ENCODE measurements at regions of chr1 and their contacts with region 1.

Region 1: DNA sequence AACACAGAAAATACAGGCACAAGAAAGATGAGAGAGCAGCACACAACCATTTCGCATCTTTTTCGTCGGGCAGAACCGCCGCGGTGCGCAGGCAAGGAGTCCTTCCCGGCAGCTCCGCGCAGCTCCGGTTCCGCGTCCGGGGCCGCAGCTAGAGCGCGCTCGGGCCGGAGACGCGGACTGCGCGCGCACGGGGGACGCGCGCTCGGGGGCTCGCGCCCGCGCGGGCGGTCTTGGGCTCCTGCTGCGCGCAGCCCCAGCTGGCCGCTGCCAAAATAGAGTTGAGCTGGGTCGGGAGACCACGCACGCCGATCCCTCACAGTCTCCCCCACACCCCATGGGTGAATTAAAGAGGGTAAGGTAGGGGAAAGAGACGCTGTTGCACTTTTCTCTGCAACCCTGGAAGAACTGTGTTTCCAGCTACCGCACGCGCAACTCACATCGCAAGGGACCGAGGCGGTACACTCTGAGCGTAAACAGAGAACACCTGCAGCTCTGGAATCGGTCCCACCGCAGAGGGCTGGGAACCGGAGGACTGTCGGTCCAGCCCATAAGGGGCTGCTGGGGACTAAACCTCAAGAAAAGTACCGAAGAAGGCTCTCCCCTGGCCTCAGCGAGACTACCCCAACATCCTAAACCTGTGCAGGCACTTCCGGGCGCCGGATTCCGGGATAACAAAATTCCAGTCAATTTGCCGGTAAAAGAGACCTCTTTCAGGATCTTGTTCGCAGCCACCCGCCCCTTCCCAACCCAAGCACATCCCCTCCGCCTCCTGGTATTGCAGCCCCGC is 1.7 kb downstream of the NR5A2 start:
- DNase-seq: peak; percentile 60 to 81
- H3K4me3 ChIP-seq: peak overlapping the region; percentile 53
- H3K4me3 Mint-ChIP-seq: peak overlapping the region; percentile 74
- H3K27ac Mint-ChIP-seq: peak overlapping the region; percentile 84
- H3K4me1 ChIP-seq: peaks cover 21% of the 10 kb centered on the region
- H3K4me1 Mint-ChIP-seq: peaks cover 9% of the 10 kb centered on the region
- H3K27me3 ChIP-seq: no peaks in the 10 kb centered on the region
- H3K27me3 Mint-ChIP-seq: no peaks in the 10 kb centered on the region
- CTCF ChIP-seq: no peak

Region 2: DNA sequence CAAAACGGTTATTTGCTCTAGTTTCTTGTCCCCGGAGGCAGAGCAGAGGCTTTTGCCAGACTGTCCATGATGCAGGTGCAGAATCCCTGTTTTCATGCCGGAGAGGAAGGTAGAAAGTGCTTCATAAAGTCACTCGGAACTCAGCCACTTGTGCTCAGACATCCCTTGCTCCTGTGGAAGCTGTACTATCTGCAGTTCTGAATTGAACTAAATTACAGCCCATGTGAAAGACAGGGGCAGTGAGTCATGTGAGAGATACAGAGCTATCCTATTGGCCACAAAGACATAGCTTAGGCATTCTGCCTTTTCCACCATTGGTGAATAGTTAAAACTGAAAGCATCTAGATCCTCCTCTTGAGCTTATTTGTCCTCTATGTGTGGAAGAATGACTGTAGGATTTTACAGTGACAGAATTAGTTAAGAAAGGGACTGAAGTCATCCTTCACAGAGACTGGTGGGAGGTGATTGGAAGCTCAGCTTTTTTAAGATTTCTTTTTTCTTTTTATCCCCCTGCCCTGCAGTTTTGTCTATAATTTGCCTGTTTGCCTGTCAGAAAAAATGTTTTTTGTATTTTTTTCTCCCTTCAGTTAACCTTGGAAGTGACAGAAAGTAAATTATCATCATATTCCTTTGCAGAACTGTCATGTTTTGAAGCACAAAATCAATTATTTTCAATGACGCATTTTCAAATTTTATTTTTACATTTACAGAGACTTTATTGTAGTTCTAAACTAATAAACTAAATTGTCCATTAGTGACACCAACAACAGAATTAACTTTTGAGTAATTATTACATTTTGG is 1091.8 kb before region 1 on chr1:
- CTCF ChIA-PET with region 1: no interaction called
- POLR2A ChIA-PET with region 1: no interaction called
- intact Hi-C with region 1: loop called (anchors 10 kb)
- DNase-seq: peak; percentile 60 to 69
- H3K4me3 ChIP-seq: peak overlapping the region; percentile 52
- H3K4me3 Mint-ChIP-seq: no peak overlapping the region
- H3K27ac Mint-ChIP-seq: peak overlapping the region; percentile 11
- H3K4me1 ChIP-seq: peaks cover 29% of the 10 kb centered on the region
- H3K4me1 Mint-ChIP-seq: peaks cover 13% of the 10 kb centered on the region
- H3K27me3 ChIP-seq: no peaks in the 10 kb centered on the region
- H3K27me3 Mint-ChIP-seq: no peaks in the 10 kb centered on the region
- CTCF ChIP-seq: no peak

Region 3: DNA sequence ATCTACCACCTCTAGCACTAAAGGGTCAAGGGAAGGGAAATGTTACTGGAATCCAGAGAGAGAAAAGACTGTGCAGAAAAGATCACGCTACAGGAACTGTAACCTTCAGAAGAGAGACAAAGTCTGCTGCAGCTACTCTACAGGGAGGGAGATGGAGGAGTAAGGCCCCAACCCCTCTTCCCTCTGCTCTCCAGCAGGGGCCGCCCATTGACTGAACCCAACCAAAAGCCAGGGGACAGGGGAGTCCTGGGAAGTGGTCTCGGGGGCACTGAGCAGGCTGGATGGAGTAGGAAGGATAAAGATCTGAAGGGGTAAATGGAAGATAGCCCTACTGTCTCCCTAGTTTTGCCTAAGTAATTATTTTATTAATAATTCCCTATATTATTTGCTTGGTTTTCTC is 74.5 kb before region 1 on chr1:
- CTCF ChIA-PET with region 1: interaction called, 6 read pairs
- POLR2A ChIA-PET with region 1: no interaction called
- intact Hi-C with region 1: loop called (anchors 1 kb)
- DNase-seq: peak; percentile 53 to 58
- H3K4me3 ChIP-seq: no peak overlapping the region
- H3K4me3 Mint-ChIP-seq: no peak overlapping the region
- H3K27ac Mint-ChIP-seq: no peak overlapping the region
- H3K4me1 ChIP-seq: 0 out of 2 replicates have a peak, but pooled peaks cover 6% of the 10 kb centered on the region
- H3K4me1 Mint-ChIP-seq: peaks cover 7% of the 10 kb centered on the region
- H3K27me3 ChIP-seq: no peaks in the 10 kb centered on the region
- H3K27me3 Mint-ChIP-seq: no peaks in the 10 kb centered on the region
- CTCF ChIP-seq: peak; percentile 59 to 82

Region 4: GRCh38 chr1:199970125-199970524 is 59.1 kb before region 1 on chr1:
- CTCF ChIA-PET with region 1: no interaction called
- POLR2A ChIA-PET with region 1: no interaction called
- intact Hi-C with region 1: no loop called
- DNase-seq: no peak
- H3K4me3 ChIP-seq: no peak overlapping the region
- H3K4me3 Mint-ChIP-seq: no peak overlapping the region
- H3K27ac Mint-ChIP-seq: no peak overlapping the region
- H3K4me1 ChIP-seq: no peaks in the 10 kb centered on the region
- H3K4me1 Mint-ChIP-seq: no peaks in the 10 kb centered on the region
- H3K27me3 ChIP-seq: no peaks in the 10 kb centered on the region; the same call in 1 of the 2 replicates
- H3K27me3 Mint-ChIP-seq: no peaks in the 10 kb centered on the region
- CTCF ChIP-seq: no peak

Region 5: DNA sequence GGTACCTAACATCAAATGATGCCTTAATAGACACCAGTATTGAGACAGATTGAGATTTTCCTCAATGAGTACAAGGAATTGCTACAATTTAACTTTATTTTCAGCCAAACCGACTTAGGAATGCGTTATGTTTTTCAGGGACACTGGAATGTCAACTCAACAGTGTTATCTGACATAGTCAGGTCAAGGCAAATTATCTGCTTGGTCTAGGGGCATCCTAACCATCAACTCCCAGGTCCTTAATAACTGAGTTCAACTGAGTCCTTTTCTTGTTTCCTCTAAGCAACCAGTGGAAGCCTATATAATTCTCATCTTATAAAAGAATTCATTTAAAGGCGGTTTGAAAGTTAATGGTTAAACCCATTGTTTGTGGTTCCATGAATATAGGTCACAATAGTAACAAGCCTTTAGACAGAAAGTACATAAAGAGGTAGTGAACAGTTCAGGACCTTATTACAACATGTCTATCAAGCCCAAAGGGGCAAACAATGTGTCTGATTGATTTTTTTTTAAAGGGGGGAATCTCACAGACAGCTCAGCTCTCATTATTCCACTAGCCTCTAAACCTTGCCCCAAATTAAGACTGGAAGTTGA is 34.0 kb before region 1 on chr1:
- CTCF ChIA-PET with region 1: no interaction called
- POLR2A ChIA-PET with region 1: interaction called, 11 read pairs
- intact Hi-C with region 1: no loop called
- DNase-seq: no peak
- H3K4me3 ChIP-seq: no peak overlapping the region
- H3K4me3 Mint-ChIP-seq: no peak overlapping the region
- H3K27ac Mint-ChIP-seq: no peak overlapping the region
- H3K4me1 ChIP-seq: peaks cover 7% of the 10 kb centered on the region; the same call in 1 of the 2 replicates
- H3K4me1 Mint-ChIP-seq: no peaks in the 10 kb centered on the region
- H3K27me3 ChIP-seq: no peaks in the 10 kb centered on the region
- H3K27me3 Mint-ChIP-seq: no peaks in the 10 kb centered on the region
- CTCF ChIP-seq: no peak

Region 6: DNA sequence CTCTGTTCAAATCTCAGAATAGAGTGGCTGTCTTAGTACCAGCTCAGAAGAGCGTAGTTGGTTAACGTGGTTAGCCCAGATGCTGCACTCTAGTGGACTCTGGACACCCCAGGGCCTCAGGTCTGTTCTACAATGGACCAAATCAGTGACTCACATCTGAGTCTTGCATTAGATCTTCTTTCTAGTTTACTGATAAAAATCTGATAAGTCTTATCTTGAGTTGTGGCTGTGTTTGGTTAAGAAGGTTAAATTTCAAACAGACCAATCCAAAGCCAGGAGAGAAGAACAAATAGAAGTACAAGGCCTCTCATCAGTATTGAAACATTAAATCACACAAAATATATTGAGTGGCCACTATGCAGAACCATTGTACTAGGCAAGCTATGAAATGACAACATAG is 102.4 kb after region 1 on chr1:
- CTCF ChIA-PET with region 1: no interaction called
- POLR2A ChIA-PET with region 1: no interaction called
- intact Hi-C with region 1: loop called (anchors 1 kb)
- DNase-seq: peak; percentile 79 to 87
- H3K4me3 ChIP-seq: no peak overlapping the region
- H3K4me3 Mint-ChIP-seq: peak overlapping the region; percentile 56
- H3K27ac Mint-ChIP-seq: peak overlapping the region; percentile 55
- H3K4me1 ChIP-seq: peaks cover 47% of the 10 kb centered on the region
- H3K4me1 Mint-ChIP-seq: peaks cover 45% of the 10 kb centered on the region
- H3K27me3 ChIP-seq: no peaks in the 10 kb centered on the region
- H3K27me3 Mint-ChIP-seq: no peaks in the 10 kb centered on the region
- CTCF ChIP-seq: peak in 1 of 2 experiments; percentile 38

Region 7: DNA sequence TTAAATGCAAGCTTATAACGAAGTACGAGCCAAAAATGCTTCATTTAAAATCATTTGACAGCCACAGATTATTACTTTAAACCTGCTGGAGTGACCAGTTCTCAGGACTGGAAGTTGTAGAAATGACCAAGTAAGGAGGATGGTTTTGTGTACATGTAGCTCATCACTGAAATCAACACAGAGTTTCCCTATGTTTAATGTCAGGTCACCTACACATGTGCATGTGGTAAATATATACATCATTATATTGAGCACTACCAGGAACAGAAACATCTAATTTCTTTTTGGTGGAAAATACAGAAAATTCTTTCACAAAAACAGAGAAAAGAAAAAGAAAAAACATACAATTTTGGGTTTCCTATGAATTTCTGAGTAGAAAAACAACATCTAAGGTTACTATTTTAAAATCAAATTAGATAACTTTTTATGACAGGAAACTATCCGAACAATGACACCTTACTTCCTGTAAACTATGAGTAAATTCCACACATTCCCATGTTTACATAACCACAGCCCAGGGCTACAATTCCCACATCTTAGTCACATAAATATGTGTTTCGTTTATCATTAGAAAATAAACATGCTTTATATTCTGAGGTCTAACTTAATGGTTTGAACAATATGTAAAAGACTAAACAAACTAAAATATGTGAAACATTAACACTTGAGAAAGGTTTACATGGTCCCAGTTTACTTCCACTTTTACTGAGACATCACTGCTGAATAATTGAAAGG is 307.1 kb after region 1 on chr1:
- CTCF ChIA-PET with region 1: no interaction called
- POLR2A ChIA-PET with region 1: no interaction called
- intact Hi-C with region 1: loop called (anchors 10 kb)
- DNase-seq: peak in 1 of 2 experiments; percentile 22
- H3K4me3 ChIP-seq: no peak overlapping the region
- H3K4me3 Mint-ChIP-seq: peak overlapping the region; percentile 38
- H3K27ac Mint-ChIP-seq: peak overlapping the region; percentile 83
- H3K4me1 ChIP-seq: peaks cover 44% of the 10 kb centered on the region
- H3K4me1 Mint-ChIP-seq: peaks cover 35% of the 10 kb centered on the region
- H3K27me3 ChIP-seq: no peaks in the 10 kb centered on the region
- H3K27me3 Mint-ChIP-seq: no peaks in the 10 kb centered on the region
- CTCF ChIP-seq: no peak

Region 8: DNA sequence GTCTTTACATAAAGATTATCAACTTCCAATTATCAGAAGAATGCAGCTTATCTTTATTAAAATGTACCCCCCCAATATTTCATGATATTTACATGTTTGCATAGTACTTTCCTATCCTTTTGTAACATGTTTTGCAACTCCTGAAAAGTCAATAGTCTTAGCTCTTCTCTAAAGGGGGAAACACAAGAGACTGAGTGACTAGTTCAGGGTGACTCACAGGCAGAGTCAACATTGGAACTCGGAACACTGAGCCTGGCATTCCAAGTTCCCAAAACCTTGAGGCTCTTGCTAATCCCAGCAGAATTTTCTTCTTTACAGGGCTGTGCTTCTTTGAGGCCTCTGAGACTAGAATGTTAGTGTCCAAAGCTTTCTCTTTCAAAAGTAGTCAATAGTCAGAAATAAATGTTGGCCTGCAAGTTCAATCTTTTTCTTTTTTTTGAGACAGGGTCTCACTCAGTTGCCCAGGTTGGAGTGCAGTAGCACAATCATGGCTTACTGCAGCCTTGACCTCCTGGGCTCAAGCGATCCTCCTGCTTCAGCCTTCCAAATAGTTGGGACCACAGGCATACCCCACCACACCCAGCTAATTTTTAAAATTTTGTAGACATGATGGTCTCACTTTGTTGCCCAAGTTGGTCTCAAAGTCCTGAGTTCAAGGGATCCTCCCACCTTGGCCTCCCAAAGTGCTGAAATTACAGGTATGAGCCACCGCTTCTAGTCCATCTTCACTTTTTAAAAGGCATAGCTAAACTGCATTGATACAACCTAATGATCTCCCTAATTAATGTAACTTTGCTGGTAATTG is 343.1 kb after region 1 on chr1:
- CTCF ChIA-PET with region 1: no interaction called
- POLR2A ChIA-PET with region 1: no interaction called
- intact Hi-C with region 1: loop called (anchors 5 kb)
- DNase-seq: peak; percentile 74 to 79
- H3K4me3 ChIP-seq: no peak overlapping the region
- H3K4me3 Mint-ChIP-seq: peak overlapping the region; percentile 45
- H3K27ac Mint-ChIP-seq: peak overlapping the region; percentile 66
- H3K4me1 ChIP-seq: peaks cover 68% of the 10 kb centered on the region
- H3K4me1 Mint-ChIP-seq: peaks cover 79% of the 10 kb centered on the region
- H3K27me3 ChIP-seq: no peaks in the 10 kb centered on the region
- H3K27me3 Mint-ChIP-seq: no peaks in the 10 kb centered on the region
- CTCF ChIP-seq: no peak